ENCODE measurements at regions of chr3 and their contacts with region 1.

Region 1: DNA sequence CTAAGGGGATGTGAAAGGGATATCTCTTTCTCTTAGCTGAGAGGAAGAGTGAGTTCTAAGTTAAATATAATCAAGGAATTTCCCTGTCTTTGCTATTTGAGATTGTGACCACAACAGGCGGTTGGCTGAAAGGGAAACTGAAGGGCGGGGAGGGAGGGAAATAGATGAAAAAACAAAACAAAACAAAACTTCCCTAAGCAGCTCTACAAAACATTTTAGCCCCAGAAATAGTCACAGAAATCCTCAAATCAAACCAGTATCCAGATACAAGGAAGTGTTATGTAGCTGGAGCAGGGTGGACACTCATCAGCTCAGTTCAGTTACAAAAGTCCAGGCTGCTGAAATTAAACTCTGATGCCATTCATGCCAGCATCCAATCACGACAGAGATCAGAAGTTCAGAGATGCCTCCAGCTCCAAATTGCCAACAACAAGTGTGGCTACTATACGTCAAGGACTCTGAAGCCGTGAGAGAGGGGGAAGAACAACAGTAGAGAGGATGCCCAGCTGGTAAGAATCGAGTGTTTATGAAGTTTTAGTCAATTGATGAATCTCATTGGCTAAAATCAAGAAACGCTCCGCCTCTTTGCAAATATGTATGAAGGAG is 319 bp upstream of the TP63 start:
- DNase-seq: peak; percentile 55
- H3K4me3 Mint-ChIP-seq: peak overlapping the region; percentile 67
- H3K27ac Mint-ChIP-seq: peak overlapping the region; percentile 81
- H3K4me1 Mint-ChIP-seq: peaks cover 22% of the 10 kb centered on the region
- H3K27me3 Mint-ChIP-seq: peaks cover 4% of the 10 kb centered on the region

Region 2: DNA sequence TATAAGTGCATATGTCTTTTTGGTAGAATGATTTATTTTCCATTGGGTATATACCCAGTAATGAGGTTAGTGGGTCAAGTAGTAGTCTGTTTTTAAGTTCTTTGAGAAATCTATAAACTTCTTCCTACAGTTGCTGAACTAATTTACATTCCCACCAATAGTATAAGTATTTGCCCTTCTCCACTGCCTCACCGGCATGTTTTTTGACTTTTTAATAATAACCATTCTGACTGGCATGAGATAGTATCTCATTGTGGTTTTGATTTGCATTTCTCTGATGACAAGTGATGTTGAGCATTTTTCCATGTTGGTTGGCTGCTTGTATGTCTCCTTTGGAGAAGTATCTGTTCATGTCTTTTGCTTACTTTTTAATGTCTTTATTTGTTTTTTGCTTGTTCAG is 93.7 kb before region 1 on chr3:
- intact Hi-C with region 1: no loop called
- DNase-seq: no peak
- H3K4me3 Mint-ChIP-seq: no peak overlapping the region
- H3K27ac Mint-ChIP-seq: peak overlapping the region; percentile 65
- H3K4me1 Mint-ChIP-seq: peaks cover 8% of the 10 kb centered on the region
- H3K27me3 Mint-ChIP-seq: peaks cover 2% of the 10 kb centered on the region

Region 3: DNA sequence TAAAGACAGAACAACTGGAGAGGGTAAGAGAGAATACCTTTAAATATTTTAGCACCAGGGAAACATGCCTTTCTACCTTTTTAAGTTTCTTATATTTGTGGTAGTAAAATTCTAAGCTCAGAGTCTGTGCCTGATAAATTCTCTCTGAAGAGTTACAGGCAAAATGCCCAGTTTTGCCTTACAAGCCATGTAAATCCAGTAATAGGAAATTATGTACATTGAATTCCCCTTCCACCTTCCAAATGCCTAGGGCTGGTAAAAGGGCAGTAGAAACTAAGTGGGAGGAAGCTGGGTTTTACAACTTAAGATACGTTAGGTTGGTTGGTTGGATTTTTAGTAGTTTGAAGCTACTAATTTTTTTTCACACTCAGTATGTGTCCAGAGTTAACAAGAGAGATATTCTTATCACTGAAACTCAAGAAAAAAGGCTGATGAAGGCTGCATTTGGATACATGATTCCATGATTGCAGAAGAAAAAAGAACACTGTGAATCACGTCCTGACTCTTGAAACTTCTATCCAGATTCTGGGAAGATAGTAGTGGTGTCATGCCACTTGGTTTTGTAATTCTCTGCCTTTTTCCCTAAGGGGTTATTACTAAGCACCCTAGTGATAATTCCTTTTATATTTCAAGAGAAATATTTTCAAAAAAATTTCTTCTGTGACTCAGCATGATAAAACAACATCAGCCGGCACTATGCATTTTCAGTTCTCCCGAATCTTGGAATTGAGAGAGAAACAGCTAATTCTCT is 42.6 kb before region 1 on chr3:
- intact Hi-C with region 1: loop called (anchors 5 kb)
- DNase-seq: no peak
- H3K4me3 Mint-ChIP-seq: no peak overlapping the region
- H3K27ac Mint-ChIP-seq: no peak overlapping the region
- H3K4me1 Mint-ChIP-seq: peaks cover 10% of the 10 kb centered on the region
- H3K27me3 Mint-ChIP-seq: peaks cover 1% of the 10 kb centered on the region

Region 4: DNA sequence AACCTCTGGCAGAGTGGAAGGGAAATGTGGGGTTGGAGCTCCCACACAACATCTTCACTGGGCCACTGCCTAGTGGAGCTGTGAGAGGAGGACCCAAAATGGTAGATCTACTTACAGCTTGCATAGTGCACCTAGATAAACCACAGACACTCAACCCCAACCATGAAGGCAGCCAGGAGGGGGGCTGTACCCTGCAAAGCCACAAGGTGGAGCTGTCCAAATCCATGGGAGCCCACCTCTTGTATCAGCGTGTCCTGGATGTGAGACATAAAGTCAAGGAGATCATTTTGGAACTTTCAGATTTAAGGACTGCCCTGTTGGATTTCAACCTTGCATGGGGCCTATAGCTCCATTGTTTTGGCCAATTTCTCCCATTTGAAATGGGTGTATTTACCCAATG is 21.2 kb after region 1 on chr3:
- intact Hi-C with region 1: no loop called
- DNase-seq: no peak
- H3K4me3 Mint-ChIP-seq: no peak overlapping the region
- H3K27ac Mint-ChIP-seq: no peak overlapping the region
- H3K4me1 Mint-ChIP-seq: no peaks in the 10 kb centered on the region
- H3K27me3 Mint-ChIP-seq: no peaks in the 10 kb centered on the region

Measured in activated CD4-positive, alpha-beta T cell treated with anti-CD3 and anti-CD28 coated beads, Interleukin-2, amount 10 ng/mL, durations not matched to agents 24 days and 14 days (primary cell).